Activated CD4-positive, alpha-beta T cell treated with anti-CD3 and anti-CD28 coated beads for 36 hours (primary cell): ENCODE measurements at regions of chr19 and their contacts with region 1.

Region 1: DNA sequence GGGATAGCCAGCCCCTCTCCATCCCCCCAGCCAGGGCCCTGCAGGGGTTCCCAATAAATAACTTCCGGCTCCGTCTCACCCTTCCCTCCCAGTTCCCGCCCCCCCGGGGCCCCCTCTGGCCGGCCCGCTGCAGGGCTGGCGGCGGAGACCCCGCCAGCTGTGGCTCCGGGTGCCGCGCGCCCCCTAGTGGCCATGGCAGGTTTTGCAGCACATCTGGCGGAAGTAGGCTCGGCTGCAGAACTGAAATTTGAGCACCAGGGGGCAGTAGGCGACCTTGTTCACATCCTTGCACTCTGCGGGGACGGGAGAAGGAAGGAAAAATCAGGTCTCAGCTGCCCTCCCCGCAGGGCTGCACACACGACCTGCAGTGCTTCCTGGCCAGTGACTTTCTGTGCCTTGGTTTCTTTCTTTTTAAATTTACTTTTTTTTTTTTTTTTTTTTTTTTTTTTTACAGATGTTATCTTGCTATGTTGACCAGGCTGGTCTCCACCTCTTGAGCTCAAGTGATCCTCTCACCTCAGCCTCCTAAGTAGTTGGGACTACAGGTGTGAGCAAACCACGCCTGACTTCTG is 3.6 kb upstream of the MYO1F start:
- DNase-seq: peak; percentile 92
- ATAC-seq: peak; percentile 70
- H3K4me3 Mint-ChIP-seq: no peak overlapping the region
- H3K27ac Mint-ChIP-seq: no peak overlapping the region
- H3K4me1 Mint-ChIP-seq: peaks cover 29% of the 10 kb centered on the region
- H3K27me3 Mint-ChIP-seq: peaks cover 2% of the 10 kb centered on the region

Region 2: GRCh38 chr19:8355631-8356402 is 225.0 kb before region 1 on chr19:
- CTCF ChIA-PET with region 1: interaction called, 19 read pairs
- POLR2A ChIA-PET with region 1: interaction called, 5 read pairs
- intact Hi-C with region 1: loop called in 1 of 2 experiments (anchors 2 kb)
- DNase-seq: no peak
- ATAC-seq: no peak
- H3K4me3 Mint-ChIP-seq: no peak overlapping the region
- H3K27ac Mint-ChIP-seq: no peak overlapping the region
- H3K4me1 Mint-ChIP-seq: peaks cover 6% of the 10 kb centered on the region
- H3K27me3 Mint-ChIP-seq: peaks cover 9% of the 10 kb centered on the region

Region 3: GRCh38 chr19:8451885-8452284 is 128.9 kb before region 1 on chr19:
- CTCF ChIA-PET with region 1: interaction called, 10 read pairs
- POLR2A ChIA-PET with region 1: no interaction called
- intact Hi-C with region 1: no loop called
- DNase-seq: no peak
- ATAC-seq: peak; percentile 59
- H3K4me3 Mint-ChIP-seq: no peak overlapping the region
- H3K27ac Mint-ChIP-seq: peak overlapping the region; percentile 43
- H3K4me1 Mint-ChIP-seq: peaks cover 87% of the 10 kb centered on the region
- H3K27me3 Mint-ChIP-seq: no peaks in the 10 kb centered on the region

Region 4: GRCh38 chr19:8557642-8558238 is 23.1 kb before region 1 on chr19:
- CTCF ChIA-PET with region 1: interaction called, 21 read pairs
- POLR2A ChIA-PET with region 1: no interaction called
- intact Hi-C with region 1: no loop called
- DNase-seq: no peak
- ATAC-seq: peak; percentile 36
- H3K4me3 Mint-ChIP-seq: no peak overlapping the region
- H3K27ac Mint-ChIP-seq: peak overlapping the region; percentile 60
- H3K4me1 Mint-ChIP-seq: peaks cover 17% of the 10 kb centered on the region
- H3K27me3 Mint-ChIP-seq: no peaks in the 10 kb centered on the region

Region 5: GRCh38 chr19:8592231-8593009 is 11.6 kb after region 1 on chr19:
- CTCF ChIA-PET with region 1: interaction called, 43 read pairs
- POLR2A ChIA-PET with region 1: no interaction called
- intact Hi-C with region 1: no loop called
- DNase-seq: peak; percentile 99
- ATAC-seq: peak; percentile 94
- H3K4me3 Mint-ChIP-seq: peak overlapping the region; percentile 70
- H3K27ac Mint-ChIP-seq: no peak overlapping the region
- H3K4me1 Mint-ChIP-seq: peaks cover 15% of the 10 kb centered on the region
- H3K27me3 Mint-ChIP-seq: no peaks in the 10 kb centered on the region

Region 6: DNA sequence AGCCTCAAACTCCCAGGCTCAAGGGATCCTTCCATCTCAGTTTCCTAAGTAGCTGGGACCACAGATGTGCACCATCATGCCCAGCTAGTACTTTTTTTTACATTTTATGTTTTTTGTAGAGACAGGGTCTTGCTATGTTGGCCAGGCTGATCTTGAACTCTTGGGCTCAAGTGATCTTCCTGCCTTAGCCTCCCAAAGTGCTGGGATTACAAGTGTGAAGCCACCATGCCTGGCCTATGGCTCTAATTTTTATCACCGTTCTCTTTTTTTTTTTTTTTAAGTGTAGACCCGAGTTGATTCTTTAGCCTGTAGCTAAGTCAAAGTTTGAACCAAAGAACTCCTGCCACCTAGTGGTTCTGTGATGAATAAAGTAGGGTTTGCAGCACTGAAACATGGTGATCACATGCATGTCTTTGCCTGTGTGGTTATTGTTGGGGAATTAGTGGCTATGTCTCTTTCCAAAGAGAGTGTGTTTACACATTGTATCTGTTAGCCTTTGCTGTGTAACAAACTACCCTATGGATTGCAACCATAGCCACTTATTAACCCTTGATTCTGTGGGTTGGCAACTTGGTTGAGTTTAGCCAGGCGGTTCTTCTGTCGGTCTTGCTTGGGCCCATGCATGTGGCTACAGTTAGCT is 61.2 kb after region 1 on chr19:
- CTCF ChIA-PET with region 1: interaction called, 9 read pairs
- POLR2A ChIA-PET with region 1: no interaction called
- intact Hi-C with region 1: loop called in 1 of 2 experiments (anchors 1 kb)
- DNase-seq: no peak
- ATAC-seq: peak; percentile 57
- H3K4me3 Mint-ChIP-seq: no peak overlapping the region
- H3K27ac Mint-ChIP-seq: no peak overlapping the region
- H3K4me1 Mint-ChIP-seq: peaks cover 3% of the 10 kb centered on the region
- H3K27me3 Mint-ChIP-seq: peaks cover 8% of the 10 kb centered on the region